Activated B cell treated with CpG ODN at 0.5 μM for 24 hours (primary cell): ENCODE measurements at regions of chr7 and their contacts with region 1.

Region 1: DNA sequence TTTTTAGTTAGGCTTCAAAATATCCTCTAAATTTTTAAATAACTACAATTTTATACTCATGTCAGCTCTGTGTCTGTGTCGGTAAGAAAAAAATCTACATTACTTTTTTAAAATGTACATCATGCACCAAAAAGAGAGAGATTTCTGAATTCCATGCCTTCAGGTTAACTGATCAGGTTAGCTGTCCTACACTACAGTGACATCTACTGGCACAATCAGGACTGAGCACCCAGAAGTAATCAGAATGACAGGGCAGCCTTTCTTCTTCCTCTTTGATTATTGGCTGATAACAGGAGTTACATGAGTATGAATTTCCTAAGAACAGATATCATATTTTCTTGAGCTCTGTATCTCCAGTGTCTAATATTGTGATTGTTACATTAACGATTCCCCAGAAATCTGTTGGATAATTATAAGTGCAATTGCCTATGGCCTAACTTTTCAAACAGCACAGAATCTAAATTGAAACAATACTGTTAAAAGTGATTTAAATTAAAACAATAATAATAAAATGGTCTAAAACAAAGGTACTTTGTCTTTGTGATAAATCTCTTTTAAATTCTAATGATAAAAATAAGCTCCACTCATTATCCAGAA is 41.8 kb upstream of the HYCC1 start:
- DNase-seq: no peak
- ATAC-seq: peak; percentile 99
- H3K4me3 Mint-ChIP-seq: no peak overlapping the region
- H3K27ac Mint-ChIP-seq: no peak overlapping the region
- H3K4me1 Mint-ChIP-seq: no peaks in the 10 kb centered on the region
- H3K27me3 Mint-ChIP-seq: no peaks in the 10 kb centered on the region
- CTCF ChIP-seq: peak; percentile 80

Region 2: GRCh38 chr7:22559829-22560489 is 495.7 kb before region 1 on chr7:
- CTCF ChIA-PET with region 1: interaction called, 46 read pairs
- POLR2A ChIA-PET with region 1: interaction called, 3 read pairs
- intact Hi-C with region 1: loop called (anchors 1 kb)
- DNase-seq: peak; percentile 43
- ATAC-seq: peak; percentile 80
- H3K4me3 Mint-ChIP-seq: peak overlapping the region; percentile 36
- H3K27ac Mint-ChIP-seq: peak overlapping the region; percentile 70
- H3K4me1 Mint-ChIP-seq: peaks cover 50% of the 10 kb centered on the region
- H3K27me3 Mint-ChIP-seq: no peaks in the 10 kb centered on the region
- CTCF ChIP-seq: peak; percentile 24

Region 3: GRCh38 chr7:22782616-22783232 is 273.0 kb before region 1 on chr7:
- CTCF ChIA-PET with region 1: interaction called, 17 read pairs
- POLR2A ChIA-PET with region 1: no interaction called
- intact Hi-C with region 1: loop called (anchors 1 kb)
- DNase-seq: peak; percentile 65
- ATAC-seq: peak; percentile 99
- H3K4me3 Mint-ChIP-seq: no peak overlapping the region
- H3K27ac Mint-ChIP-seq: no peak overlapping the region
- H3K4me1 Mint-ChIP-seq: no peaks in the 10 kb centered on the region
- H3K27me3 Mint-ChIP-seq: no peaks in the 10 kb centered on the region
- CTCF ChIP-seq: no peak

Region 4: GRCh38 chr7:22944022-22944421 is 111.7 kb before region 1 on chr7:
- CTCF ChIA-PET with region 1: interaction called, 3 read pairs
- POLR2A ChIA-PET with region 1: no interaction called
- intact Hi-C with region 1: loop called (anchors 5 kb)
- DNase-seq: no peak
- ATAC-seq: no peak
- H3K4me3 Mint-ChIP-seq: no peak overlapping the region
- H3K27ac Mint-ChIP-seq: no peak overlapping the region
- H3K4me1 Mint-ChIP-seq: no peaks in the 10 kb centered on the region
- H3K27me3 Mint-ChIP-seq: no peaks in the 10 kb centered on the region
- CTCF ChIP-seq: no peak

Region 5: GRCh38 chr7:23026164-23026563 is 29.5 kb before region 1 on chr7:
- CTCF ChIA-PET with region 1: interaction called, 14 read pairs
- POLR2A ChIA-PET with region 1: no interaction called
- intact Hi-C with region 1: no loop called
- DNase-seq: no peak
- ATAC-seq: no peak
- H3K4me3 Mint-ChIP-seq: no peak overlapping the region
- H3K27ac Mint-ChIP-seq: peak overlapping the region; percentile 54
- H3K4me1 Mint-ChIP-seq: peaks cover 53% of the 10 kb centered on the region
- H3K27me3 Mint-ChIP-seq: no peaks in the 10 kb centered on the region
- CTCF ChIP-seq: no peak